Aorta (tissue), 5 donors: ENCODE measurements at regions of chr3 and their contacts with region 1.

Region 1: GRCh38 chr3:173725507-173725906 is 328.0 kb downstream of the NLGN1 start:
- DNase-seq: no peak
- ATAC-seq: no peak
- H3K4me3 ChIP-seq: no peak overlapping the region
- H3K27ac ChIP-seq: no peak overlapping the region
- H3K4me1 ChIP-seq: no peaks in the 10 kb centered on the region
- H3K27me3 ChIP-seq: no peaks in the 10 kb centered on the region

Region 2: GRCh38 chr3:173304182-173304800 is 421.2 kb before region 1 on chr3:
- intact Hi-C with region 1: no loop called
- DNase-seq: no peak
- ATAC-seq: no peak
- H3K4me3 ChIP-seq: no peak overlapping the region
- H3K27ac ChIP-seq: no peak overlapping the region
- H3K4me1 ChIP-seq: no peaks in the 10 kb centered on the region
- H3K27me3 ChIP-seq: no peaks in the 10 kb centered on the region

Region 3: DNA sequence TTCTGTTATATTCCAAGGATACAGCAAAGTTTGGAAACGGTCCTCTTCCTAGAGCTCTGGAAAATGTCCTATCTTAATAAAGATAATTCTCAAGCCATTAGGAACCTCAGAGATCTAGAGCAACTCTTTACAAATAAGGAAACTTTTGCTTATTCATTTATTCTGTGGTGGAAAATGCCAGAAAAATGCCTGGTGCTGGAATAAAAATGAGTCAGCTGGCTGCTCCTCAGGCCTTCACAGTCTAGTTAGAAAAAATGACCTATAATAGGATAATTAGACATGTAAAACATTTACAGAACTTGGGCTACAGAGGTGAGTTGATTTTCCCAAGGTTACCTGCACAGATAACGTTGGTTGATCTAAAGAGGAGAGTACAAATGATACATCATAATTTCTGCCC is 44.5 kb after region 1 on chr3:
- intact Hi-C with region 1: no loop called
- DNase-seq: no peak
- ATAC-seq: no peak
- H3K4me3 ChIP-seq: no peak overlapping the region
- H3K27ac ChIP-seq: no peak overlapping the region
- H3K4me1 ChIP-seq: no peaks in the 10 kb centered on the region
- H3K27me3 ChIP-seq: no peaks in the 10 kb centered on the region

Region 4: DNA sequence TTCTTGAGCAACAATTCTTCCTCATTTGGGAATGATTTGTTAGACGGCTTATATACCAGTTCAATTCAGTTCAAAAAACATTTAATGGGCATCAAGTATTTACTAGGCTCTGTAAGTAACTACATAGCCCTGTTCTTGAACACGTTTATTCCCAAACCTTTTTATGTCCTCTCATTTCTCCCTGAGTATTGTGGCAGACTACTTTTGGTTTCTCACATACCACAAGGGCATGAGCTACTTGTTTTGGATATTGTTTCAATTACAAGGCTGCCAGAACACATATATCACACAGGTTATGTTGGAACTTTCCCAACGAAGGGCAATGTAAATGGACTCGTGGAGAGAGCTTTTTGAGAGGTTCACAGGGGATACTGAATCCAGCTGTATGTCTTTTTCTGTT is 769.8 kb after region 1 on chr3:
- intact Hi-C with region 1: loop called in 1 of 2 experiments (anchors 5 kb)
- DNase-seq: no peak
- ATAC-seq: no peak
- H3K4me3 ChIP-seq: no peak overlapping the region
- H3K27ac ChIP-seq: peak overlapping the region in 1 of 2 donors; percentile 67
- H3K4me1 ChIP-seq: no peaks in the 10 kb centered on the region
- H3K27me3 ChIP-seq: no peaks in the 10 kb centered on the region